Aorta (tissue), 5 donors: ENCODE measurements at regions of chr4 and their contacts with region 1.

Region 1: DNA sequence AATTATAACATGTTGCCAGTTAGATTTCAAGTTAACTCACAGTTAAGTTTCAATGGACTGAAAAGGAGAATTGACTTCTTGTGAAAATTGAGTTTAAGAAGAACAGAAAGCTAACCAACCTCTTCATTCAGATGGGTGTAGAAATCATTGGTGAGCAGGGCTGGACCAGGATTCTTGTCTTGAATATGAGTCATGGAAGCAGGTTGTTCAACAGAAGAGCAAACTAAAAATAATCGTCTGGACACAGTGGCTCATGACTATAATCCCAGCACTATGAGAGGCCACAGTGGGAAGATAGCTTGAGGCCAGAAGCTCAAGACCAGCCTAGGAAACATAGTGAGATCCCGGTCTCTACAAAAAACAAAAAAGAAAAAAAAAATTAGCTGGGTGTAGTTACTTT is 98.2 kb downstream of the ARSJ start:
- DNase-seq: no peak
- ATAC-seq: no peak
- H3K4me3 ChIP-seq: no peak overlapping the region
- H3K27ac ChIP-seq: peak overlapping the region; percentile 33 to 87
- H3K4me1 ChIP-seq: peaks cover 0 to 2% of the 10 kb centered on the region in 2 donors
- H3K27me3 ChIP-seq: no peaks in the 10 kb centered on the region

Region 2: DNA sequence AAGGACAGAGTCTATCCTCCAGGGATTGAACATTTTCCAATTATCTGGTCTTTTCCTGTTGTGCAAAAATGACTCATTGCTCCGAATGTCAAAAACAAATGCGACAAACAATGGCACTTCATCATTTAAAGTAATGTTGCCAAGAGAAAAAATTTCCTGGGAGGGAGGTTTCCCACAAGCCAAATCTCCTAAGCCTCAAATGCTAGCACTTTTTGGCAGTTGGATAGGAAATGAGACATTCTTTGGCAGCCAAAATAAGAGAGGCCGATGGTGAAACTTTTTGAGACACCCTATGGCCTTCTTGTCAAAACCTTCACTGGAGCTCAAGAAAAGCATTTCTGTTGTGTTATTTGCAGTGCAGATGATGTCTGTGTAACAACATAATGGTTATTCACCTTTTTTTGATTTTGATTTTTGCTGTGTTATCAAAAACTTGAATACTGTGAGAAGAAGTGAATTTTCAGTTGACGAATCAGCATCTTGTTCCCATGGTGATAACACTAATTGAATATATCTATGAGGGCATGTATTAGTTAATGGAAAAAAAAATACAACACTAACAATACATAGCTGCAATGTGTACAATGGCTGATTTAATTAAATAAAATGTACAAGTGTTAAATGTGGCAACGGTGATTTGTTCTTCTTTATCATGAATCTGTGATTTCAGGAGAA is 498.0 kb before region 1 on chr4:
- intact Hi-C with region 1: loop called in 1 of 2 experiments (anchors 10 kb)
- DNase-seq: no peak
- ATAC-seq: peak; percentile 81
- H3K4me3 ChIP-seq: no peak overlapping the region
- H3K27ac ChIP-seq: no peak overlapping the region
- H3K4me1 ChIP-seq: no peaks in the 10 kb centered on the region
- H3K27me3 ChIP-seq: no peaks in the 10 kb centered on the region